Panc1 (cell line): ENCODE measurements at regions of chr2 and their contacts with region 1.

Region 1: DNA sequence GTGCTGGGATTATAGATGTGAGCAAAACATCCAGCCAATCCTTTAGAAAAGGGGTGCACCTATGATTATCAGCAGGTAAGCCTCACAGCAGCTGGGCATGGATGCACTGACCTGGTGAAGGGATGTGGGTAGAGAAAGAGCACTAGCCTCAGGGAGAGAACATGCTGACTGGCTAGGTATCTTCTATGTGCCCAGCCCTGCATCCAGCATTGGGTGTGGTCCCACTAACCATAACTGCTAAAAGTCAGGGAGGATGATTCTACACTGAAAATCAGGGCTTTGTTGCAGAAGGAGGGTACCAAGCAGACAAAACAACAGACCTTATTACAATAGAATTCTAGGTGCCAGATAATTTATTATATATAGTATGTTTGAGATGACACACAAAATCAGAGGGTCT is 21.1 kb upstream of the RGPD8 start:
- DNase-seq: no peak
- ATAC-seq: no peak
- H3K4me3 ChIP-seq: no peak overlapping the region
- H3K27ac ChIP-seq: no peak overlapping the region
- H3K4me1 ChIP-seq: no peaks in the 10 kb centered on the region
- H3K27me3 ChIP-seq: no peaks in the 10 kb centered on the region
- CTCF ChIP-seq: no peak

Region 2: GRCh38 chr2:112301171-112301584 is 153.4 kb before region 1 on chr2:
- CTCF ChIA-PET with region 1: no interaction called
- POLR2A ChIA-PET with region 1: interaction called, 13 read pairs
- in situ Hi-C with region 1: no loop called
- intact Hi-C with region 1: no loop called
- DNase-seq: no peak
- ATAC-seq: peak; percentile 66
- H3K4me3 ChIP-seq: no peak overlapping the region
- H3K27ac ChIP-seq: no peak overlapping the region
- H3K4me1 ChIP-seq: peaks cover 12% of the 10 kb centered on the region; the same call in 1 of the 2 replicates
- H3K27me3 ChIP-seq: no peaks in the 10 kb centered on the region
- CTCF ChIP-seq: no peak